ENCODE measurements at regions of chr3 and their contacts with region 1.

Region 1: DNA sequence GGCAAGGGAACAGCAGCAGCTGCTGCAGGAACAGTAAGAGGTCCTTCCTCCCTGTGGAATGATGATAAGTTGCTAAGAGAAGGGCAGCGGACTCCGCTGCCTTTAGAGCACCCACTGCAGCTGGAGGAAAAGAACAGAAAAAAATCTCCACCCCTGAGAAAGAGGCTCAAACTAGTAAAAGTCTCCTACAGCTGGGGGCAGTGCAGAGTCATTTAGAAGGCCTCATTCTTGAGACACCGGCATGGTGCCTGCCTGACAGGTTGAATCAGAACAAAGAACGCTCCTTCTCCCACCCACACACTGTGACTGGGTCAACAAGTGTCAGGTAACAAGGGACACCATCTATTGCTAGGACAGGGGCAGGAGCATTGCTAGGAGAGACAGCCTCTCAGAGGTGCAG is 188.4 kb downstream of the ABHD5 start:
- DNase-seq: peak; percentile 66
- ATAC-seq: peak; percentile 68
- H3K4me3 ChIP-seq: no peak overlapping the region
- H3K27ac ChIP-seq: no peak overlapping the region
- H3K4me1 ChIP-seq: peaks cover 20% of the 10 kb centered on the region
- H3K27me3 ChIP-seq: no peaks in the 10 kb centered on the region
- CTCF ChIP-seq: peak; percentile 69

Region 2: DNA sequence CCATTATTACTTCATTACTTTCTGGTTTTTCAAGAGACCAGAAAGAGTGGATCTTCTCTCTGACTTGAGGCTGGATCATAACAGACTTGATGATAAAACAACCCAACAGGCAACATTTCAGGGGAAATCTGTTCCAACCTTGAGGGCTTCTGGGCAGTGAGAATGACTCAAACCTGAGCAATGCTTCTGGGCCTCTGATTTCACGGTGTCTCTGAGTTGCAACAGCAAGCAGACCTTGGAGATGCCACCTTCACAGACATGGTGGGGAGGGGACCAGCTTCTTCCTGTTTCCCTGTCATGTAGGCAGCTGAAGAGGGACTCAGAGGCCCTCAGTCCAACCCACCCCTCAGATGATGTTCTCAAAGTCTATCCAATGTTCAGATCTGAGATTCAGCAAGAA is 84.4 kb before region 1 on chr3:
- CTCF ChIA-PET with region 1: no interaction called
- POLR2A ChIA-PET with region 1: no interaction called
- intact Hi-C with region 1: no loop called
- DNase-seq: peak; percentile 74
- ATAC-seq: peak; percentile 53
- H3K4me3 ChIP-seq: no peak overlapping the region
- H3K27ac ChIP-seq: no peak overlapping the region
- H3K4me1 ChIP-seq: peaks cover 24% of the 10 kb centered on the region
- H3K27me3 ChIP-seq: no peaks in the 10 kb centered on the region
- CTCF ChIP-seq: no peak

Region 3: GRCh38 chr3:43953814-43954692 is 74.9 kb after region 1 on chr3:
- CTCF ChIA-PET with region 1: no interaction called
- POLR2A ChIA-PET with region 1: no interaction called
- intact Hi-C with region 1: loop called (anchors 10 kb)
- DNase-seq: peak; percentile 70
- ATAC-seq: peak; percentile 92
- H3K4me3 ChIP-seq: no peak overlapping the region; the same call in 1 of the 2 replicates
- H3K27ac ChIP-seq: no peak overlapping the region
- H3K4me1 ChIP-seq: peaks cover 14% of the 10 kb centered on the region
- H3K27me3 ChIP-seq: no peaks in the 10 kb centered on the region
- CTCF ChIP-seq: no peak